Dorsolateral prefrontal cortex (tissue), 120 donors: ENCODE measurements at regions of chr1 and their contacts with region 1.

Region 1: GRCh38 chr1:156282479-156283222 is at the start of gene SMG5:
- DNase-seq: peak; percentile 83 to 96 (median 95)
- H3K4me3 ChIP-seq: peak within 1 kb of the TSS; percentile 71 to 97 (median 88)
- H3K27ac ChIP-seq: peak within 1 kb of the TSS; percentile 65 to 98 (median 91)
- H3K27me3 ChIP-seq: no peaks in the 10 kb centered on the region
- CTCF ChIP-seq: peak in 33 of 56 donors; percentile 7 to 55 (median 27)
- total RNA-seq, gene SMG5: 66.8 to 160 (median 95.9) TPM

Region 2: GRCh38 chr1:156293073-156293930 is 10.7 kb after region 1 on chr1:
- intact Hi-C with region 1: loop called in 1 of 2 experiments (anchors 1 kb)
- DNase-seq: no peak
- H3K4me3 ChIP-seq: no peak overlapping the region
- H3K27ac ChIP-seq: peak overlapping the region in 2 of 59 donors; percentile 7 to 10
- H3K27me3 ChIP-seq: no peaks in the 10 kb centered on the region
- CTCF ChIP-seq: no peak

Region 3: GRCh38 chr1:156338180-156338973 is 55.7 kb after region 1 on chr1 and contains the starts of genes CCT3 and TSACC:
- intact Hi-C with region 1: loop called (anchors 2 to 10 kb)
- DNase-seq: peak; percentile 91 to 100 (median 98)
- H3K4me3 ChIP-seq: peak within 1 kb of the TSS; percentile 46 to 100 (median 89)
- H3K27ac ChIP-seq: peak within 1 kb of the TSS; percentile 5 to 99 (median 93)
- H3K27me3 ChIP-seq: no peaks in the 10 kb centered on the region
- CTCF ChIP-seq: peak in 16 of 56 donors; percentile 2 to 30 (median 14)
- total RNA-seq, gene CCT3: 93.9 to 244 (median 146) TPM
- total RNA-seq, gene TSACC: 0.67 to 1.6 (median 1.1) TPM in 8 of 120 experiments, not detected in the others